ENCODE measurements at regions of chr17 and their contacts with region 1.

Region 1: GRCh38 chr17:48625495-48626244 is 488 bp downstream of the HOXB9 start:
- DNase-seq: no peak
- ATAC-seq: peak in 3 of 4 donors; percentile 49 to 67 (median 59)
- H3K4me3 ChIP-seq: peak overlapping the region; percentile 1 to 47 (median 37)
- H3K27ac ChIP-seq: no peak overlapping the region
- H3K4me1 ChIP-seq: peaks cover 7 to 26% (median 21%) of the 10 kb centered on the region in 12 donors
- H3K27me3 ChIP-seq: peaks cover 86 to 100% (median 100%) of the 10 kb centered on the region in 9 donors
- CTCF ChIP-seq: no peak
- POLR2A ChIP-seq: no peak

Region 2: GRCh38 chr17:48162946-48163506 is 462.6 kb before region 1 on chr17:
- intact Hi-C with region 1: loop called in 1 of 10 experiments (anchors 10 kb)
- DNase-seq: no peak
- ATAC-seq: no peak
- H3K4me3 ChIP-seq: no peak overlapping the region
- H3K27ac ChIP-seq: no peak overlapping the region
- H3K4me1 ChIP-seq: peaks cover 0 to 8% (median 0%) of the 10 kb centered on the region in 12 donors
- H3K27me3 ChIP-seq: peaks cover 0 to 38% (median 2%) of the 10 kb centered on the region in 9 donors
- CTCF ChIP-seq: no peak
- POLR2A ChIP-seq: no peak

Region 3: DNA sequence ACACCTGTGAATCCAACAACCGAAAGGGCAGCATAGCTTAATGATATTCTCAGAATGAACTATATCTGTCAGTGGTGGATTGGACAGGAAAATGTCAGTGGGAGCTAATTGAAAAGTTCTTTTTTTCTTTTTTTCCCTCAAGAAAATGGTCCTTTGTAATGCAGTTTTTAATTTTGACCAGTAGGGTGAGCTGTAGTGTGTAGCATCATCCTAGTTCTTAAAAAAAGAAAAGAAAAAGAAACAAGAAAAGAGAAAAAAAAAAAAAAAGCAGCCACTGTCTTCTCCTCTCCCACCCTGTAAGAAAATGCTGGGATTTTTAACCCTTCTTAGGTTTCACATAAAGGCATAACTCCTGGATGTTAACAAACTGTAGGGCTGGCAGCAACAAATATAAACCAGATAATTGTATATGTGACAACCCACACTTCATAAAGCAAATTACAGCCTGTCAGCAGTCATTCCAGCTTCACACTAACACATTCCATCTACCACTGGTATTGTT is 273.8 kb before region 1 on chr17:
- intact Hi-C with region 1: loop called in 1 of 10 experiments (anchors 5 kb)
- DNase-seq: no peak
- ATAC-seq: no peak
- H3K4me3 ChIP-seq: no peak overlapping the region
- H3K27ac ChIP-seq: no peak overlapping the region
- H3K4me1 ChIP-seq: no peaks in the 10 kb centered on the region
- H3K27me3 ChIP-seq: peaks cover 0 to 82% (median 7%) of the 10 kb centered on the region in 9 donors
- CTCF ChIP-seq: peak; percentile 46 to 71 (median 60)
- POLR2A ChIP-seq: no peak